Head of caudate nucleus (tissue), 42 donors: ENCODE measurements at regions of chr22 and their contacts with region 1.

Region 1: DNA sequence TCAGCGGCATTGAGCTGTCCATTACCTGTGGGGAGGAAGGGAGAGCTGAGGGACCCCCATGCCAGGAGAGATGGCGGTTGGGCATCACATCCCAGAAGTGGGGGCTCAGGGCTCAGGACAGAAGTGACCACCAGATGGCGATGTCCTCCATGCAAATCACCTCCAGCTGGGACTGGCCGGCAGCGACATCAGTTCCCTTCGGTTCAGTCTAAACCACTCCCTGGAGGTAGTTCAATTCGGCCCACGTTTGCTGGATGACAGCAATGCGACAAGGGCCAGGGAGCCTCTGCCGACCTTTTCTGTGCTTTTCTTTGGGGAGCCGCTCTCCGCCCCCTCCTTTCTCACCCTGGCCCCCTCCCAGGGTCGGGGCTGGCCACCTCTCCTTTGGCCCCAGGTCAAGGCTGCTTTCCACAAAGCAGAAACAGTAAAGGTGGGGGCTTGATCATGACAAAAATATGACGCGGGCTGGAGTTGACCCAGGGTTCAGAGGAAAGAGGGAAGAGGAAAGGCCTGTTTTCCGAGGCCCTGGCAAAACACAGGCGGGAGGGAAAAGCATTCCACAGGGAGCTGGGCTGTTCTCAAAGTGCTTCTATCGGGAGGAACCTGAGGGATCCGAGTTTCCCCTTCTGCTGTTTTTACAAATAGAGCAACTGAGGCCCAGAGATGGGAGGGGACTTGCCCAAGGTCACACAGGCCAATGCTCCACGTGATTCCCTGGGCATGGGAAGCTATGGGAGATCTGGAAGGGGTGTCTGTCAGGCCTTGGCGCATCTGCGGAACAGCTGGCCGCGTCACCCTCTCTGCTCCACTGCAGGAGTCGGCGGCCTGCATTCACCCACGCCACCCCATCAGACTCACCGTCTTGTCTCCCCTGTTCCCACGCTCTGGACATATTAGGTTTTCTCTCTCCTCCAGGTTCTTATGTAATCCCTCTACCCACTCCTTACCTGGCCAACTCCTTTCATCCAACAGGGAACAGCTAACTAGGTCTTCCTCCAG is 54.7 kb downstream of the FBXO7 start:
- DNase-seq: peak; percentile 73 to 95 (median 89)

Region 2: DNA sequence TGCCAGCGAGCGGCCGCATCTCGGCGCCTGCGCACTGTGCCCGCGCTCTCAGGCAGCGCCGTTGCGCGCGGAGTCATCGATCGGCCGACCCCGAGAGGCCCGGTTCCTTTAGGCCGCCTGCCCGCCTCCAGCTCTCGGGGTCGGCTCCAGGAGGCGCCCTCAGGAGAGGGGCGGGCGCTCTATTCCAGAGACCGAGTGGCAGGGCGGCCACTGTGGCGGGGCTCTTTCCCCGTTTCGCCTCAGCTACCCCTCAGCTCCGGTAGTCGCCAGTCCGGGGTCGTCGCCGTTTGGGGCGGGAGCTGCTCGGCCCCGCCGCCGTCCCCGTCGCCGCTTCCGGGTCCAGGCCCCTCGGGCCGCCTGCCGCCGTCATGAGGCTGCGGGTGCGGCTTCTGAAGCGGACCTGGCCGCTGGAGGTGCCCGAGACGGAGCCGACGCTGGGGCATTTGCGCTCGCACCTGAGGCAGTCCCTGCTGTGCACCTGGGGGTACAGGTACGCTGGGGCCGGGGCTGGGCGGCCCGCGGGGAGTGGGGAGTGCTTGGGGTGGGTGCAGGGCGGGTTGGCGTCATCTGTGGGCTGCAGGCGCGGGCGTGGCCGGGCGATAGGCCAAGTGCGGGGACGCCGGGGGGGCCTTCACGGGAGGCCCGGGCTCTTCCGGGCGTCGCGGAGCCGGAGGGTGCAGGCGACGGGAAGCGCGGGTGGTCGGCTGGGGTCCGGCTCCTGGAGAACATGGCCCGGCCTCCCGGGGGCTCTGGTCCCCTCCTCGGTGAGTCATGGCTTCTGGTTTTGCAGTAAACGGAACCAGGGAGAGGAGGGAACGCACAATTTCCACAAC is 54.4 kb before region 1 on chr22 and contains the start of gene FBXO7:
- intact Hi-C with region 1: loop called (anchors 5 kb)
- DNase-seq: peak; percentile 75 to 97 (median 94)

Region 3: DNA sequence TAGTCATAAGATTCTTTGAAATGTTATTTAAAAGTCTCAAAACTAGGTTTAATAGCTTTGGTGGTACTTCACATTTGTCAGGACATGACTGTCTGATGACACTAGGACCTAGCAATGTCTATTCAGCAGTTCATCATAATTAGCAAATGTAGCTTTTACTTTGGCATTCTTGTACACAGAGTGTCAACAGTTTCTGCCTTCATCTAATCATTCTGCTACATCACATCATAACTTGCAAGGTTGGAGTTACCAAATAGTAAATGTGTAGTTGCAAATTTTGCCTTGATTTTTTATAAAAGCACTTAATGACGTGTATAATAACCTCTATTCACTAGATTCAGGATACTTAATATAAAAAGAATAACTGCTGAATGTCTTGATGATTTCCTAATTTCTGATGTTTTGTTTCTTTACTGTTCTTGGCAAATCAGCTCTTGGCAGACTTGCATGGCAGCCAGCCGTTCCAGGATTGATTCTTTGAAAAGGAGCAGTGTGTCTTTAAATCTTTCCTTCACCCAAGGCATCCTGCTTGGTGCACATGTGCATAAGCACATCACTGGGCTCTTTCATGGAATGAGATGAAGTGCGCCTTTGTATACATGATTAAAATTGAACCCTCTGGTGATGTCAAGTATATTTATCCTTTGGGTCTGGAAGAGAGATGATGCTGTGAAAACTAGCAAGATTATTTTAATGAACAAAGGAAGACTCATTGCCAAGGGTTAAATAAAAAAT is 42.5 kb before region 1 on chr22:
- intact Hi-C with region 1: no loop called
- DNase-seq: peak in 17 of 42 donors; percentile 21 to 73 (median 35)

Region 4: GRCh38 chr22:32796865-32797573 is 267.7 kb after region 1 on chr22:
- intact Hi-C with region 1: loop called (anchors 2 kb)
- DNase-seq: peak; percentile 63 to 92 (median 83)

Region 5: GRCh38 chr22:32985899-32986765 is 456.8 kb after region 1 on chr22:
- intact Hi-C with region 1: loop called (anchors 10 kb)
- DNase-seq: peak; percentile 46 to 91 (median 76)

Region 6: GRCh38 chr22:33006220-33006954 is 477.1 kb after region 1 on chr22:
- intact Hi-C with region 1: loop called (anchors 5 kb)
- DNase-seq: peak in 2 of 42 donors; percentile 21 to 32